ENCODE measurements at regions of chr18 and their contacts with region 1.

Region 1: GRCh38 chr18:22348521-22349316 is 69.0 kb downstream of the CTAGE1 start:
- ATAC-seq: peak; percentile 61 to 87 (median 67)
- H3K4me3 ChIP-seq: peak overlapping the region; percentile 22 to 32 (median 29)
- H3K27ac ChIP-seq: no peak overlapping the region
- H3K4me1 ChIP-seq: peaks cover 7 to 21% of the 10 kb centered on the region in 2 donors

Region 2: DNA sequence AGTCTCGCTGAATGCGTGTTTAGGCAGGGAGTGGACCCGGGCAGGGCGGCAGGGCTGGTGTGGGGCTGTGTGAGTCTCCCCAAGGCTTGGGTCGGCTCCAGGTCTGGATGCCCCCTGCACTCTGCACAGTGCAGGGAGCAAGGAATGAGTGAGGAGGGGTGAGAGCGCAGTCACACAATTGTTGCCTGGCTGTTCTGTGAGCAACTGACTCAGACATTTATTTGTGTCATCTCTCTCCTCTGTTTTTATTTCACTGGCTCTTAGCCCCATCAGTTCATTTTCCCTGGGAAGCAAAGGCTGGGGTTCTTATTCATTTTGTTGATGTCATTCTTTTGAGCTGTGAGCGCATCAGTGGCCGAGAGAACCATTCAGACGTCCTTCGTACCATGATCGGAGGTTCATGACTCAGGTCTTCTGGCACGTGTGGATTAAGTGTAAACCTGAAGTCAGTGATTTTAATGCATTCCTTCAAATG is 118.2 kb before region 1 on chr18:
- in situ Hi-C with region 1: loop called in 1 of 9 experiments (anchors 25 kb)
- ATAC-seq: peak in 3 of 8 experiments; percentile 79 to 98 (median 84)
- H3K4me3 ChIP-seq: no peak overlapping the region
- H3K27ac ChIP-seq: no peak overlapping the region
- H3K4me1 ChIP-seq: no peaks in the 10 kb centered on the region